BJ (cell line): ENCODE measurements at regions of chr5 and their contacts with region 1.

Region 1: DNA sequence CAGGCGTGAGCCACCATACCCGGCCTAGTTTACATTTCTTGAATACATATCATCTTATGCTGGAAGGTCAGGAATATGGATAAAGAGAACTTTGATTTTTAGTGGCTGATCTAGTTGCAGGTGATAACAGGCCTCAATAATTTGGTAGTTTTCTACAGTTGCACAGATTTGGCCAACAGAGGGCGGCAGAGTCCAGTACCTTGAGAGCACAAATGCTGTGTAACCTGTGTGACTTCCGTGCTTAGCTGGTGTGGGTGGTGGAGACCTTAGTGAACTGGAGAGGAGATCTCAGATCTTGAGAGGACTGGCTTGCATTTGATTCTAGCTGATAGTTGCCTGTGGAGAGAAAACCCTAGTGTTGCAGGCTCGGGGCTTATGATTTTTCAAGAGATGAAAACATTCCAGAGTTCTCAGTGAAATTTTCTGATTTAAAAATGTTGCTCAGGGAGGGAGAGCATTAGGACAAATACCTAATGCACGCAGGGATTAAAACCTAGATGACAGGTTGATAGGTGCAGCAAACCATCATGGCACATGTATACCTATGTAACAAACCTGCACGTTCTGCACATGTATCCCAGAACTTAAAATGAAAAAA is 17.4 kb upstream of the GPR151 start:
- DNase-seq: no peak
- H3K4me3 ChIP-seq: no peak overlapping the region
- H3K27me3 ChIP-seq: 0 out of 2 replicates have a peak, but pooled peaks cover 2% of the 10 kb centered on the region
- CTCF ChIP-seq: peak; percentile 90

Region 2: DNA sequence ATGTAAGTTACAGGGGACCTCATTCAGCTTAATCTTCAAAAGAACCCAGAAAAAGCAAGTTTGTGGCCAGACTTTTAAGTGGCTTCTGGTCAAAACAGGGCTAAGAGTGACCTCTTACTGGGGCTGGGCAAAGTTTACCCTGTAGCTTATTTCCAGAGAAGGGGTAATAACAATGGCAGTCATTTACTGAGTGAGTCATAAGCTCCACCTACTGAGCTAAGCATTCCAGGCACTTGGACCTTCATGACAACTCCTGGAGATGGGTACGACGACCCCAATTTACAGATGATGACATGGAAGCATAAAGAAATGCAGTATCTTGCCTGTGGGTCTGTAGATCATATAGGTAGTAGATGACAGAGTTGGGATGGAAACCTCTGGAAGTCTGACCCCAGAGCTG is 12.6 kb before region 1 on chr5:
- CTCF ChIA-PET with region 1: interaction called, 11 read pairs
- POLR2A ChIA-PET with region 1: no interaction called
- DNase-seq: no peak
- H3K4me3 ChIP-seq: no peak overlapping the region
- H3K27me3 ChIP-seq: no peaks in the 10 kb centered on the region
- CTCF ChIP-seq: no peak